Mammary epithelial cell (primary cell): ENCODE measurements at regions of chr9 and their contacts with region 1.

Region 1: GRCh38 chr9:35051069-35051967 is 21.1 kb downstream of the VCP start:
- DNase-seq: peak; percentile 27
- H3K4me3 ChIP-seq: no peak overlapping the region
- H3K27ac ChIP-seq: no peak overlapping the region
- H3K4me1 ChIP-seq: peaks cover 4% of the 10 kb centered on the region
- H3K27me3 ChIP-seq: no peaks in the 10 kb centered on the region
- CTCF ChIP-seq: peak; percentile 61 to 68

Region 2: GRCh38 chr9:34994260-34994899 is 56.9 kb before region 1 on chr9:
- CTCF ChIA-PET with region 1: interaction called, 17 read pairs
- dilution Hi-C with region 1: no loop called
- in situ Hi-C with region 1: no loop called
- intact Hi-C with region 1: no loop called
- DNase-seq: peak; percentile 43
- H3K4me3 ChIP-seq: no peak overlapping the region
- H3K27ac ChIP-seq: no peak overlapping the region
- H3K4me1 ChIP-seq: peaks cover 36% of the 10 kb centered on the region
- H3K27me3 ChIP-seq: no peaks in the 10 kb centered on the region
- CTCF ChIP-seq: peak; percentile 82

Region 3: GRCh38 chr9:35026671-35027070 is 24.6 kb before region 1 on chr9:
- CTCF ChIA-PET with region 1: no interaction called
- dilution Hi-C with region 1: no loop called
- in situ Hi-C with region 1: no loop called
- intact Hi-C with region 1: no loop called
- DNase-seq: no peak
- H3K4me3 ChIP-seq: no peak overlapping the region
- H3K27ac ChIP-seq: no peak overlapping the region
- H3K4me1 ChIP-seq: peaks cover 15% of the 10 kb centered on the region
- H3K27me3 ChIP-seq: no peaks in the 10 kb centered on the region
- CTCF ChIP-seq: no peak

Region 4: GRCh38 chr9:35193762-35194161 is 142.4 kb after region 1 on chr9:
- CTCF ChIA-PET with region 1: no interaction called
- dilution Hi-C with region 1: no loop called
- in situ Hi-C with region 1: no loop called
- intact Hi-C with region 1: no loop called
- DNase-seq: no peak
- H3K4me3 ChIP-seq: no peak overlapping the region
- H3K27ac ChIP-seq: no peak overlapping the region
- H3K4me1 ChIP-seq: no peaks in the 10 kb centered on the region
- H3K27me3 ChIP-seq: no peaks in the 10 kb centered on the region
- CTCF ChIP-seq: peak in 1 of 2 donors; percentile 5

Region 5: GRCh38 chr9:35603987-35604577 is 552.8 kb after region 1 on chr9:
- CTCF ChIA-PET with region 1: no interaction called
- dilution Hi-C with region 1: no loop called
- in situ Hi-C with region 1: no loop called
- intact Hi-C with region 1: no loop called
- DNase-seq: peak; percentile 99
- H3K4me3 ChIP-seq: peak overlapping the region; percentile 60 to 67 (median 64)
- H3K27ac ChIP-seq: peak overlapping the region; percentile 68
- H3K4me1 ChIP-seq: peaks cover 28% of the 10 kb centered on the region
- H3K27me3 ChIP-seq: no peaks in the 10 kb centered on the region
- CTCF ChIP-seq: peak; percentile 82 to 83